ENCODE measurements at regions of chr16 and their contacts with region 1.

Region 1: DNA sequence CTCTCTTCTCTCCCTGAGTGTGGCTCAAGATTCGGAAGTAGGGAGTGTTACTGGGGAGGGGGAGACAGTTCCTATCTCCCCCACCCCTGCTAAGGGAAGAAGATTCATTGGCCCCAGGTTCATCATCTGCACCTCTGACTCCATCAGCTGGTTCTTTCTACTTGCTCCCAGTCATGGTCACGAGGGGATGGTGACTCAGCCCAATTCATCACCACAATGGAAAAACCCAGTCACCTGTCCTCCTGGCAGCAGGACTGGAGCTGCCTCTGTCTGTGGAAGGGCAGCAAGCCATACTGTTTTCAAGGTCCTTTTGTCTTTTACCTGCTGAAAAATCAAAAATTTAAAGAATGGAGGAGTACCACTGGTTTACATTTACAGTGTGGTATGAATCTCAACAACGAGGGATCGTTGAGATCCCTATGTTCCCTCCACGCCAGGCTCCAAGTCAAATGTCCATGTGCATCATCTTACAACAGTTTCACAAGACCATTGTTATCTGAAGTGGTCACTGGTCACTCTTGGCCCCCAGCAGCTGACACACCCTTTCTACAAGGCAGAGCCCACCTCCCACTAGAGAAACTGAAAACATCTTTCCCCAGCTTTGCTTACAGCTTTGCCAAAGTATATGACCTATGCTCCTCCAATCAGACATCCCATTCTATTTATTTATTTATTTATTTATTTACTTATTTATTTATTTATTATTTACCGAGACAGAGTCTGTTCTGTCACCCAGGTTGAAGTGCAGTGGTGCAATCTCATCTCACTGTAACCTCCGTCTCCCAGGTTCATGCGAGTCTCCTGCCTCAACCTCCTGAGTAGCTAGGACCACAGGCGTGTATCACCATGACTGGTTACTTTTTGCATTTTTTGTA is 40.4 kb upstream of the NDRG4 start:
- DNase-seq: peak in 2 of 5 donors; percentile 33 to 72
- ATAC-seq: peak in 2 of 4 donors; percentile 22 to 36
- H3K4me3 ChIP-seq: no peak overlapping the region
- H3K27ac ChIP-seq: peak overlapping the region in 10 of 12 donors; percentile 32 to 99 (median 78)
- H3K4me1 ChIP-seq: peaks cover 0 to 38% (median 11%) of the 10 kb centered on the region in 12 donors
- H3K27me3 ChIP-seq: peaks cover 0 to 31% (median 0%) of the 10 kb centered on the region in 9 donors
- CTCF ChIP-seq: no peak
- POLR2A ChIP-seq: no peak

Region 2: GRCh38 chr16:58366247-58367031 is 93.1 kb before region 1 on chr16:
- intact Hi-C with region 1: no loop called
- DNase-seq: no peak
- ATAC-seq: no peak
- H3K4me3 ChIP-seq: no peak overlapping the region
- H3K27ac ChIP-seq: no peak overlapping the region
- H3K4me1 ChIP-seq: no peaks in the 10 kb centered on the region
- H3K27me3 ChIP-seq: no peaks in the 10 kb centered on the region
- CTCF ChIP-seq: no peak
- POLR2A ChIP-seq: no peak

Region 3: DNA sequence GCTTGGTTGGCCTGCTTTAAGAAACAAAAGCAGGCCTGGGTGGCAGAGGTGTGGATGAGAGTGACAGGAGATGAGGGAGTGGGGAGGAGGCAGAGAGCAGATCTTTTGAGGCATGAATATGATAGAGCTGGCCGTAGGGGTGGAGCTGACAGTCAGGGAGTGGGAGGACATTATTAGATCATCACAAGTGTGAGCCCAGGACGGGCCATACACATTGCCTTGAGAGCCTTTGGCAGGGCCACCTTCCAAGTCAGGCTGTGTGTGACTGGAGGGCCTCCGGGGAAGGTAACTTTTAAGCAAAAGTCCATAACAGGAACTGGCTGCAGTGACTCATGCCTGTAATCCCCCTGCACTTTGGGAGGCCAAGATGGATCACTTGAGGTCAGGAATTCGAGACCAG is 41.0 kb before region 1 on chr16:
- intact Hi-C with region 1: loop called in 5 of 10 experiments (anchors 2 to 5 kb)
- DNase-seq: peak; percentile 67 to 91 (median 69)
- ATAC-seq: peak; percentile 84 to 88 (median 86)
- H3K4me3 ChIP-seq: no peak overlapping the region
- H3K27ac ChIP-seq: peak overlapping the region; percentile 83 to 99 (median 92)
- H3K4me1 ChIP-seq: peaks cover 0 to 55% (median 11%) of the 10 kb centered on the region in 12 donors
- H3K27me3 ChIP-seq: no peaks in the 10 kb centered on the region
- CTCF ChIP-seq: no peak
- POLR2A ChIP-seq: peak in 1 of 2 donors; percentile 37

Region 4: DNA sequence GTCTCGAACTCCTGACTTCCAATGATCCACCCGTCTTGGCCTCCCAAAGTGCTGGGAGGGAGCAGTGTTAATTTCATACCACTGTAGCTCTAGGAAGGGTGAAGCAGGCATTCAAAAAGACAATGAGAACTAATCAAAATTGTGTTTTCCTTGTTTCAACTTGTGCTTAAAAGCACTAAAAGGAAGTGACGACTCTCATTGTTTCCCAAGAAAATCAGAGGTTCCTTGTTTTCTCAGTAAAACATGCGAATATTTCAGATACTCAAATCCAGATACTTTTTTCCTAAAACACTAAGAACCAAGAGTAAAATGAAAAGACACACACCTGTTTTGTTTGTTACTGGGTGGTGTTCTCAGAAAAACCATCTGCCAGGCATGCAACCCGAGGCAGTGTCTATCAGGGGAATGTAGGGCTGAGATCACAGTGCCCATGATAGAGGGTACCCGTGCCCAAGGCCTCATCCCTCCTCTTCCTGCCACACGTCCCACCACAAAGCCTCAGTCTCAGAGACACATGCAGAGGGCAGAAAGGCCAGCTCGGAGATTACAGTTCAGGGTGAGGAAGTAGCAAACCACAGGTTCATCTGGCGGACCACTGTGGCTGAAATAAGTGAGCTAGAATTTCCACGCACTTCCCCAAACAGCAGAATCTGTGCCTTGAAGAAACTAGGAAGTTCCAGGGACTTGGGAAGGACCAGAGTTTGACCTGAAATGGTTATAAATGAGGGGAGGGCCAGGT is 33.7 kb before region 1 on chr16:
- intact Hi-C with region 1: loop called in 1 of 10 experiments (anchors 5 kb)
- DNase-seq: peak in 3 of 5 donors; percentile 16 to 35 (median 24)
- ATAC-seq: peak; percentile 16 to 42 (median 18)
- H3K4me3 ChIP-seq: peak overlapping the region in 1 of 12 donors; percentile 44
- H3K27ac ChIP-seq: peak overlapping the region; percentile 42 to 97 (median 68)
- H3K4me1 ChIP-seq: peaks cover 0 to 61% (median 12%) of the 10 kb centered on the region in 12 donors
- H3K27me3 ChIP-seq: no peaks in the 10 kb centered on the region
- CTCF ChIP-seq: no peak
- POLR2A ChIP-seq: no peak

Measured in heart left ventricle (tissue), 16 donors.